ENCODE measurements at regions of chr11 and their contacts with region 1.

Region 1: GRCh38 chr11:93221539-93221938 is 23.7 kb upstream of the SLC36A4 start:
- DNase-seq: no peak
- ATAC-seq: no peak

Region 2: DNA sequence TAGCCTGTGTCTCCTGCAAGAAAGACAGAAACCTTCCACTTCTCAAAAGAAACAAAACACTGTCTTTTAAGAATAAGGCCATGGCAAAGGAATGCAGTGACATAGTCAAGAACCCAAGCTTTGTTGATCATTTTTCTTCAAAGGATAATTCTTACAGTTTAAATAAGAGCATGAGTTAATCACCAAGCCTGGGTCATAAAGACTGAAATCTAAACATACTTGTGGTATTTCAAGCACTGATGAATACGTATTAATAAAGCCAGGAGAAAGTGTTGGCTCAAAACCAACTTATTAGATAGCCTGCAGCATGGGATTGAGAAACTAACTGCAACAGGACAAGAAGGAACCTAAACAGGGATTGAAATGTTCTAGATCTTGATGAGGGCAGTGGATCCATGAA is 395.4 kb before region 1 on chr11:
- intact Hi-C with region 1: no loop called
- DNase-seq: no peak
- ATAC-seq: no peak

Region 3: DNA sequence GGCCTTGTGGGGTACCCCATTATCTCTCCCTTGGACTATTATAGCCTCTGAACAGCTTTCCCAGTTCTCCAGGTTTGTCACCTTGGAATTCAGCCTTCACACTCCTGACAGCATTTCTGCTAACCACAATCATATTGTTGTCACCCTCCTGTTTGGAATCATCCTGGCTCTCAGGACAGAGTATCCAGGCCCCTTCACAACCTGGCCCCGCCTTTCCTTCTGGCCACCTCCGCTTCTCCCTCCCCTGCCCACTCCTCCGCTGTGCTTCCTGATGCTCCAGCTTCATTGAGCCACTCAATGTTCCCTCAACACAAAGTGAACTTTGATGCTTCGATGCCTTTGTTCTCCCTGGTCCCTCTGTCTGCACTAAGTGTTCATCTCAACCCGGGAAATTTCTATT is 1176.6 kb after region 1 on chr11:
- intact Hi-C with region 1: loop called (anchors 5 kb)
- DNase-seq: no peak
- ATAC-seq: no peak